Common myeloid progenitor, CD34-positive (primary cell): ENCODE measurements at regions of chr20 and their contacts with region 1.

Region 1: GRCh38 chr20:37693635-37694626 is at the start of gene CTNNBL1:
- DNase-seq: peak; percentile 96 to 98 (median 98)
- H3K4me3 ChIP-seq: peak within 1 kb of the TSS; percentile 65 to 99 (median 94)
- H3K27ac ChIP-seq: peak within 1 kb of the TSS; percentile 76 to 86
- H3K4me1 ChIP-seq: peaks cover 2 to 18% (median 6%) of the 10 kb centered on the region in 4 experiments
- H3K27me3 ChIP-seq: peaks cover 3 to 18% (median 7%) of the 10 kb centered on the region in 5 experiments

Region 2: DNA sequence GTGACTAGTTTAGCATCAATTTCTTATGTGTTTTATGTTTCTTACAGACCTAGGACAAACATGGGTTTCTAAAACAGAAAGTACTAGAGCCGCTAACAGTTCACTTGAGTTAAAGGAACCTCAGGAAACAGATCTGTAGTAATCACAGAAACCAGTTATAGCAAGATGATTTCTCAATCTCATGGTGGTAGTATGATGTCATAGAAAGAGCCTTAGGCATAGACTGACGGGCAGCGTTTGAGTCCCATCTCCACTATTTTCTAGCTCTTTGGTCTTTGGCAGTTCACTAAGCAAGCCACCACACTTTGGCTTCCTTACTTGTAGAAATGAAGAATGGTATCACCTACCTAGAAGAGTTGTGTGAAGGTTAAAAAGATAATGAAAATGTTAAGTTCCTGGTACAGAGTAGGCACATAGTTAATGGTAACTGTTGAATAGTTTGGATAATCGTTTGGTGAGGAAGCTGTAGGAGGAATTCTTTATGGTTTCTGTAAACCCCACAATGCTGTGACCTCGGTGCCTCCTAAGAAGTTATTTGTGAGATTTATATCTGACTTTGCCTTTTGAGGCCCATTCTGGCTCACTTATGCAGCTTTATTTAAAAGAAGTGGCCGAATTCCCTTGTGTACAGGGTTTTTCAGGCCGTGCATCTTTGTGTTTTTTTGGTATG is 21.2 kb after region 1 on chr20:
- CTCF ChIA-PET with region 1: interaction called, 23 read pairs
- POLR2A ChIA-PET with region 1: interaction called, 3 read pairs
- DNase-seq: peak; percentile 61 to 93 (median 83)
- H3K4me3 ChIP-seq: peak overlapping the region in 2 of 7 experiments; percentile 38 to 52
- H3K27ac ChIP-seq: peak overlapping the region; percentile 93 to 94
- H3K4me1 ChIP-seq: peaks cover 6 to 63% (median 25%) of the 10 kb centered on the region in 4 experiments
- H3K27me3 ChIP-seq: no peaks in the 10 kb centered on the region